ENCODE measurements at regions of chr12 and their contacts with region 1.

Region 1: DNA sequence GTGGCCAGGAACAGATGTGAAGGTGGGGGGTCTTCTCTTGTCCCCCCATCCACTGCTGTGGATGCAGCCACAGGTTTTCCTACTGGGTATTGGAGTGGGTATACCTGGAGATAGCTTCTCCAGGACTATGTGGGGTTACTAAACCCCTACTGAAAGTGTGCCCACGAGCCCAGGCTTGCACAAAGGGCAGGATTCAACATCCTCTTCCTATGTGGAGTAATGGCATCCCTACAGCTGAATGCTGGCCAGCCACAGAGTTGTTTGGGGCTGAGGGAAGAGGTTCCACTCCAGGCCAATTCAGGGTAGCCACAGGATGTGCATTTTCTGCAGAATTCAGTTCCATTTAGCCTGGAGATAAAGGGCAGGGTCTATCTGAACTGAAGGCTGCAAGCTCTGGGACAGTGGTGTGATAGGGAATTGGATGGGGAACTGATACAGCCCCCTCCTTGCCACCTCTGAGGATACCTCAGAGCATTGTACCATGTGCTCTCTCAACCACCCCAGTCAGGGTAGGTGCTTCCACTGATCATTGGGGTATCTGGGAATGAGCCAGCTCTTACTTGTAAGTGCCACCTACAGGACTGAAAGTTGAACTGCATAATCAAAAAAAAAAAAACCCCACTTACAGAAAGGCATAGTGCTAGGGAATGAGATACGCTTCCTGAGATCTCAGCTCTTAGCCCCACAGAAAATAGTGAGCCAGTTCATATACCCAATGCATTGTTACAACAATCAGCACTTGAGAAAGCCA is 187.1 kb downstream of the KITLG start:
- DNase-seq: peak; percentile 36
- H3K4me3 ChIP-seq: no peak overlapping the region
- H3K27ac ChIP-seq: no peak overlapping the region
- H3K4me1 ChIP-seq: no peaks in the 10 kb centered on the region
- CTCF ChIP-seq: peak; percentile 69

Region 2: DNA sequence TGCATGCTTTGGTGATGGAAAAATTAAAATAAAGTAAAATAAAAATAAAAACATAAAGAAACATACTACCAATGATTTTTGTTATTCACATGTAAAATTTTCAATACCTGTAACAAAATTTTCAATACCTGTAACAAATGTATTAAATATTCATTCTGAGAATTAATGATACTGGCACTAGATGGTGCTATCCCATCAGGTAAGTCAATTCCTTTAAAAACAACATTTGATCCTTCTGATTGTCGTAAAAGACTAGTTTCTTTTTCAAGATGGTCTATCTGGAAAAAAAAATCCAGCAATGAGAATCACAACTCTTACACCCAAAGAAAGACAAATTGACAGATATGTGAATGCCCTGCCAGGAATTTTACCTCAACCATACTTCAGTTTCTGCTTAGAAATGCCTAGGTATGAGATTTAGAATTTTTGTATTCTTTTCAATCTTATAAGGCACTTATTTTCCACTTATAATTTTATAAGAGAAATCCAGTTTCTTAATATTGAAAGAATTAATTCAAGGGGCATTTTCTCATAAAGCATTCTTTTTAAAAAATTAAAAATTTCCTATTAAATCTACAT is 282.0 kb before region 1 on chr12:
- CTCF ChIA-PET with region 1: no interaction called
- POLR2A ChIA-PET with region 1: no interaction called
- intact Hi-C with region 1: loop called (anchors 5 kb)
- DNase-seq: peak; percentile 36
- H3K4me3 ChIP-seq: no peak overlapping the region
- H3K27ac ChIP-seq: no peak overlapping the region
- H3K4me1 ChIP-seq: no peaks in the 10 kb centered on the region
- CTCF ChIP-seq: peak; percentile 81

Region 3: GRCh38 chr12:88153959-88154358 is 239.2 kb before region 1 on chr12:
- CTCF ChIA-PET with region 1: no interaction called
- POLR2A ChIA-PET with region 1: no interaction called
- intact Hi-C with region 1: loop called (anchors 1 kb)
- DNase-seq: peak; percentile 30
- H3K4me3 ChIP-seq: no peak overlapping the region
- H3K27ac ChIP-seq: no peak overlapping the region
- H3K4me1 ChIP-seq: no peaks in the 10 kb centered on the region
- CTCF ChIP-seq: peak; percentile 71; the same call in 1 of the 2 replicates

Region 4: GRCh38 chr12:88325076-88325815 is 67.9 kb before region 1 on chr12:
- CTCF ChIA-PET with region 1: no interaction called
- POLR2A ChIA-PET with region 1: no interaction called
- intact Hi-C with region 1: no loop called
- DNase-seq: no peak
- H3K4me3 ChIP-seq: no peak overlapping the region
- H3K27ac ChIP-seq: no peak overlapping the region
- H3K4me1 ChIP-seq: no peaks in the 10 kb centered on the region
- CTCF ChIP-seq: no peak

Measured in OCI-LY7 (cell line).